ENCODE measurements at regions of chr3 and their contacts with region 1.

Region 1: DNA sequence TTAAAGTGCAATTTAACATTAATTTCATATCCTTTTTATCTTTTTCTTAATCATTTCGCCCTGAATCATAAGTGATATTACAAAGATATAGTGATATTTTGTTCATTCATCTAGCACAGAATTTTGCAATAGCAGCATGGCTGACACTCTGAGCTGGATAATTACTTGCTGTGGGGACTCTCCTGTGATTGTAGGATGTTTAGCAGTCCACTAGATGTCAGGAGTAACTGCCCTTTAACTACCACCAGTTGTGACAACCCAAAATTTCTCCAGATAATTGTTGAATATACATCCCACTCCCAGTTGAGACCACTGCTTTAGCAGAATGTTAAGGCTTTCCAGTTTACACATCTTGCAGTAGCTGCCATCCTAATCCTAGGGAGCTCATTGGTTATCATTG is 196.8 kb upstream of the MBNL1 start:
- DNase-seq: peak; percentile 70
- ATAC-seq: peak; percentile 85
- H3K4me3 ChIP-seq: no peak overlapping the region
- H3K27ac ChIP-seq: no peak overlapping the region
- H3K4me1 ChIP-seq: no peaks in the 10 kb centered on the region
- H3K27me3 ChIP-seq: no peaks in the 10 kb centered on the region
- CTCF ChIP-seq: peak; percentile 75
- POLR2A ChIP-seq: no peak
- RAD21 ChIP-seq: peak; percentile 91

Region 2: GRCh38 chr3:152159328-152159727 is 87.4 kb after region 1 on chr3:
- CTCF ChIA-PET with region 1: interaction called, 3 read pairs
- POLR2A ChIA-PET with region 1: no interaction called
- dilution Hi-C with region 1: no loop called
- in situ Hi-C with region 1: no loop called
- intact Hi-C with region 1: loop called (anchors 5 kb)
- DNase-seq: peak; percentile 94
- ATAC-seq: peak; percentile 97
- H3K4me3 ChIP-seq: no peak overlapping the region
- H3K27ac ChIP-seq: no peak overlapping the region
- H3K4me1 ChIP-seq: peaks cover 2% of the 10 kb centered on the region; the same call in 1 of the 2 replicates
- H3K27me3 ChIP-seq: no peaks in the 10 kb centered on the region
- CTCF ChIP-seq: no peak
- POLR2A ChIP-seq: no peak
- RAD21 ChIP-seq: no peak

Region 3: GRCh38 chr3:152444029-152444641 is 372.2 kb after region 1 on chr3:
- CTCF ChIA-PET with region 1: interaction called, 8 read pairs
- POLR2A ChIA-PET with region 1: no interaction called
- dilution Hi-C with region 1: no loop called
- in situ Hi-C with region 1: loop called (anchors 10 kb)
- intact Hi-C with region 1: loop called (anchors 1 kb)
- DNase-seq: peak; percentile 73
- ATAC-seq: peak; percentile 50; the same call in 1 of the 2 replicates
- H3K4me3 ChIP-seq: no peak overlapping the region
- H3K27ac ChIP-seq: no peak overlapping the region
- H3K4me1 ChIP-seq: peaks cover 4% of the 10 kb centered on the region
- H3K27me3 ChIP-seq: no peaks in the 10 kb centered on the region
- CTCF ChIP-seq: peak; percentile 64
- POLR2A ChIP-seq: no peak
- RAD21 ChIP-seq: peak; percentile 70

Region 4: DNA sequence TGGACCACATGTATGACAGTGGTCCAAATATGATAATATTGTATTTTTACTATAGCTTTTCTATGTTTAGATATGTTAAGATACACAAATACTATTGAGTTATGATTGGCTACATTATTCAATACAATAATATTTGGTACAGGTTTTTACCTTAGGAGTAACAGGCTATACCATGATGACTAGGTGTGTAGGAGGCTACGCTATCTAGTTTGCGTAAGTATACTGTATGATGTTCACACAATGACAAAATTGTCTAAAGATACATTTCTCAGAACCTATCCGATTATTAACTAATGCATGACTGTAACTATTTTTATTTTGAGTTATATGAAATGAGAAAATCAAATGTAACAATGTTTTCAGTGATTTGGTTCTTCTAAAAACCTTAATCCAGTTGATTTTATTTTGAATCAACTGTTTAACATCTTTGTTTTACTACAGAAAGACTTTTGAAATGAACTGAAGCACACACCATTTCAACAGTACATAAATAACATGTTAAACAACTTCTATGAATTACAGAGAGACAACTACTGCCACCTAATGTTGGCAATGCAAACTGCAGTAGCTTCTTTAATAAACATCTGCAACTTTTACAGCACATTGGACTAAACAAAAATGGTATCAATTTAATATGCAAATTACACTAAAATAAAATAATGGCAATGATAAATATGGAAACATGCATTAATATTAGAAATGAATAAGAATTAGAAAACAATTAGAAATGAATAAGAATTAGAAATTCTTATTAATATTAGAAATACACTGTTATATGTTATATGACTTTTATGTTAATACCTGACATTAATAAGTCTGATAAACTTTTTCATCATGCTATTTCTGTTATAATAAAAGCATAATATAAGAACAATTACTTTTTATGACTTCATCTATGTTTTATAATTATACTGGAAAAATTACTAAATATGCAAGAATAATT is 452.5 kb after region 1 on chr3:
- CTCF ChIA-PET with region 1: no interaction called
- POLR2A ChIA-PET with region 1: no interaction called
- dilution Hi-C with region 1: no loop called
- in situ Hi-C with region 1: no loop called
- intact Hi-C with region 1: loop called (anchors 10 kb)
- DNase-seq: peak; percentile 62
- ATAC-seq: peak; percentile 77
- H3K4me3 ChIP-seq: no peak overlapping the region
- H3K27ac ChIP-seq: no peak overlapping the region
- H3K4me1 ChIP-seq: no peaks in the 10 kb centered on the region
- H3K27me3 ChIP-seq: no peaks in the 10 kb centered on the region
- CTCF ChIP-seq: peak; percentile 77
- POLR2A ChIP-seq: no peak
- RAD21 ChIP-seq: peak; percentile 70

Region 5: DNA sequence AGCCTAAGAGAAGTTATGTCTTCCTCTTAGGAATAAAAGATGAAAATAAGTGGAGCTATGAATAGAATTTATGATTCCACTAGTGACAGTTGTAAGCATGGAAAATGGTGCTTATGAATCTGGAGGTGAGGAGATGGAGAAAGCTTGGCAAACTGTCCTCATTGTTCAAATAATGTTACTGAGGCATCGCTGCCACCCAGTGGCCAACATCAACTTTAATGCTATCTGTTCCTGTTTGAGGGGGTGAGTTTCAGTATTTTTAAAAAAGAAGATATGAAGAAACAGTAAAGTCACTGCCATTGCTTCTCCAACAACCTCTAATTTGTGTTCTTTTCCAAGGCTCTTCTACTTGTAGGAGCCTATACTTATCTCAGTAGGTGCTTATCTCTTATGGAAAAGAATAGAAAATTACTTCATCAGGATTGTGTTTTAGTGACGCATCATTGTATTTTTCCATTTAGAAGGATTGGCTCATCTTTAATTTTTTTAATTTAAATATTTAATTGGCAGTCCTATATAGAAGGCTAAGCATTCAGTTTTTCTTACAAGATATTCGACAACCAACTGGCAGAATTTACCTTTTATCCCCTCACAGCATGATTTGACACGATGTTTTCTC is 502.6 kb after region 1 on chr3:
- CTCF ChIA-PET with region 1: no interaction called
- POLR2A ChIA-PET with region 1: no interaction called
- dilution Hi-C with region 1: no loop called
- in situ Hi-C with region 1: no loop called
- intact Hi-C with region 1: loop called (anchors 10 kb)
- DNase-seq: peak; percentile 51
- ATAC-seq: peak; percentile 85
- H3K4me3 ChIP-seq: no peak overlapping the region
- H3K27ac ChIP-seq: no peak overlapping the region
- H3K4me1 ChIP-seq: no peaks in the 10 kb centered on the region
- H3K27me3 ChIP-seq: peaks cover 3% of the 10 kb centered on the region; the same call in 1 of the 2 replicates
- CTCF ChIP-seq: peak; percentile 56
- POLR2A ChIP-seq: no peak
- RAD21 ChIP-seq: peak; percentile 67

Measured in IMR-90 (cell line).